OCI-LY7 (cell line): ENCODE measurements at regions of chr1 and their contacts with region 1.

Region 1: GRCh38 chr1:6401673-6402072 is 8.1 kb upstream of the ACOT7 start:
- DNase-seq: no peak
- H3K4me3 ChIP-seq: no peak overlapping the region
- H3K27ac ChIP-seq: no peak overlapping the region
- H3K4me1 ChIP-seq: no peaks in the 10 kb centered on the region
- CTCF ChIP-seq: no peak

Region 2: GRCh38 chr1:6343506-6344405 is 57.9 kb before region 1 on chr1:
- CTCF ChIA-PET with region 1: no interaction called
- POLR2A ChIA-PET with region 1: no interaction called
- intact Hi-C with region 1: loop called (anchors 10 kb)
- DNase-seq: peak; percentile 58
- H3K4me3 ChIP-seq: no peak overlapping the region
- H3K27ac ChIP-seq: no peak overlapping the region
- H3K4me1 ChIP-seq: no peaks in the 10 kb centered on the region
- CTCF ChIP-seq: peak; percentile 84

Region 3: GRCh38 chr1:6579374-6580118 is 177.9 kb after region 1 on chr1 and contains the start of gene ZBTB48:
- CTCF ChIA-PET with region 1: no interaction called
- POLR2A ChIA-PET with region 1: no interaction called
- intact Hi-C with region 1: no loop called
- DNase-seq: peak; percentile 98
- H3K4me3 ChIP-seq: peak within 1 kb of the TSS; percentile 86
- H3K27ac ChIP-seq: peak within 1 kb of the TSS; percentile 38
- H3K4me1 ChIP-seq: peaks cover 29% of the 10 kb centered on the region
- CTCF ChIP-seq: no peak
- total RNA-seq, gene ZBTB48: 28.9 and 41.9 TPM in 2 replicates